Activated naive CD4-positive, alpha-beta T cell treated with anti-CD3 and anti-CD28 coated beads for 36 hours (primary cell): ENCODE measurements at regions of chr2 and their contacts with region 1.

Region 1: DNA sequence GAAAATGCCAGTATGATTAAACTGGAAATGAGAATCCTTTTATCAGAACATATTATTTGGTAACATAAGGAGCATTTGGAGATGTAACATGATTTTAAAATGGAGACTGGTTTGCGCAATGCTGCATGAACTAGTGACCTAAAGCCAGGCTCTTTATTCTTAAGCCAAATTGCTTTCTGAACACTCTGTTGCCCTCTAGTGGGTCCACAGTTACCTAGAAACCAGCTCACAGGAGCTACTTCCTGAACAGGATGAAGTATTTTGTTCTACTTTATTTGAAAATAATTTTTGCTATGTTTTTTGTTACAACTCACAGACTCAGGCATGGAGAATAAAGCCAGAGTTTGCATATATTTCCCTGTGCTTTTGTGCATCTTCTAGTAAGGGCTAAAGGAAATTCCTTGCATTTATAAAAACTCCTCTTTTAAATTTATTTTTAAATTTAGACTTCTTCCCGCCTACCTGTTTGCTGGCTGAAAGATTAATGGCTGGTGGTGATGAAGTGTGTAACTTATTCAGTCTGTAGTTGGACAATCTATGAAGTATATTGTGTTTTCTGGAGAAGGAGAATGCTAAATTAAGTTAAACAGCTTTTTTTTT is 146.7 kb downstream of the PARD3B start:
- DNase-seq: peak; percentile 63
- H3K4me3 Mint-ChIP-seq: no peak overlapping the region
- H3K27ac Mint-ChIP-seq: no peak overlapping the region
- H3K4me1 Mint-ChIP-seq: peaks cover 7% of the 10 kb centered on the region
- H3K27me3 Mint-ChIP-seq: no peaks in the 10 kb centered on the region

Region 2: DNA sequence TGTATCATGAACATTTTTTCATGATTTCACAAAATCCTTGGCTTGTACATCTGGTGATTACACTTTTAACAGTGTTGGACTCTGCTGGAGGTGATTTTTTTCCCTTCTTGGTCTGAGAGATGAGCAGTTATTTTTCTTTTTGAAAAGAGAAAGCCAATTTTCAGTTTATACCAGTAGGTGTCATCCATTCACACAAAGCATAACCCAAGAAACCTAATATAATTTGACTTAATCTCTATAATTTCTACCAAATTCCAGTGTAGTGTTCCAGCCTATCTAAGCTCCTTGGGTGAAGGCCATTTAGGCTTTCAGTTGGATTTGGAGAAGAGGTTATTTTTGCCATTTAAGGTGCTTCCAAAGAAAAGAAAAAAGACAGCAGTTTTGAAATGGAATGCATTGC is 763.2 kb before region 1 on chr2:
- CTCF ChIA-PET with region 1: no interaction called
- intact Hi-C with region 1: loop called (anchors 1 kb)
- DNase-seq: no peak
- H3K4me3 Mint-ChIP-seq: no peak overlapping the region
- H3K27ac Mint-ChIP-seq: no peak overlapping the region
- H3K4me1 Mint-ChIP-seq: peaks cover 43% of the 10 kb centered on the region
- H3K27me3 Mint-ChIP-seq: no peaks in the 10 kb centered on the region

Region 3: DNA sequence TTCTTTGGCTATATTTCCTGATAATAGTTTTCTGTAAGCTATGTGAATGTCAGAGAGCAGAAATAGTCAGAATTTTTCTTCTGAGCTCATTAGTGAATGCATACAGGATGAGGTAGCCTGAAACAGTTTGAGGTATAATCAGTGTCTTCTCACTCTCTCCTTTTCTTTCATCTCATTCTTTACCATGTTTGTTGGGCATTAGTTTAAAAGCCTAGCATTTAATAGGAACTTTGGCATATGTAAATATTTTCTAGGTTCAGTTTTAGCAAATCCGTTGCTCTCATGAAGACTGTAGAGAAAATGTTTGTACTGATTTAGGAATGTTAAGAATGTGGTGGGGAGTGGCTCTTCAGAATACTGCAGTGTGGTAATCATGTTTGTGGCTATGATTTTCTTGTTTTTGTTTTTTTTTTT is 27.3 kb before region 1 on chr2:
- CTCF ChIA-PET with region 1: no interaction called
- intact Hi-C with region 1: no loop called
- DNase-seq: no peak
- H3K4me3 Mint-ChIP-seq: no peak overlapping the region
- H3K27ac Mint-ChIP-seq: no peak overlapping the region
- H3K4me1 Mint-ChIP-seq: no peaks in the 10 kb centered on the region
- H3K27me3 Mint-ChIP-seq: no peaks in the 10 kb centered on the region

Region 4: GRCh38 chr2:206311026-206311425 is 1619.0 kb after region 1 on chr2:
- CTCF ChIA-PET with region 1: no interaction called
- intact Hi-C with region 1: no loop called
- DNase-seq: no peak
- H3K4me3 Mint-ChIP-seq: no peak overlapping the region
- H3K27ac Mint-ChIP-seq: no peak overlapping the region
- H3K4me1 Mint-ChIP-seq: no peaks in the 10 kb centered on the region
- H3K27me3 Mint-ChIP-seq: peaks cover 5% of the 10 kb centered on the region